ENCODE measurements at regions of chr11 and their contacts with region 1.

Region 1: DNA sequence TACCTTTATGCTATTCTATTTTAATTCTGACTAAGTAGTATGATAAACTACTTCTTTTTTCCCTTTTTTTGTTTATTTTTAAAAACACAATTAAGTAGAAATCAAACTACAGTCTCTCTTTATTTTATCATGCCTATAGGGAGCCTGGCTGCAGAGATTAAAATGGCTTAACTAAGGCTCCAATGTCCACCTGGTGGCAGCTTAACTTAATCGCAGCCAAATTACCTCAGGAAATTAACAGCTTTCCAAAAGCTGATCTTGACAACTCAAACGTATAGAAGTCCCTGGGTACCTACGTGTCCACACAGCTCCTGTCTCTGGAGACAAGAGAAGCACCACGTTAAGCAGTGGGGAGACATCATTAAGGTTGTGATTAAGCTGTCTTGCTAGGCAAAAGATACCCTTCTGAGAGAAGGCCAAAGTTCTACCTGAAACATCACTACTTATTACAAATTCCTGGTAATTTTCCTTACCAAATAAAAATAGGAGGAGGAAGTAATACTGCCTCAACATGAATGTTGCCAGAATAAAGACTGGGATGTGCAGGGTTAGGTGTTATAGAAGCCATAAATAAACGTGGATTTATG is 63.2 kb upstream of the SNX19 start:
- DNase-seq: no peak
- CTCF ChIP-seq: peak; percentile 24

Region 2: GRCh38 chr11:130817330-130817944 is 162.0 kb before region 1 on chr11:
- CTCF ChIA-PET with region 1: no interaction called
- POLR2A ChIA-PET with region 1: no interaction called
- DNase-seq: no peak
- CTCF ChIP-seq: no peak

Region 3: DNA sequence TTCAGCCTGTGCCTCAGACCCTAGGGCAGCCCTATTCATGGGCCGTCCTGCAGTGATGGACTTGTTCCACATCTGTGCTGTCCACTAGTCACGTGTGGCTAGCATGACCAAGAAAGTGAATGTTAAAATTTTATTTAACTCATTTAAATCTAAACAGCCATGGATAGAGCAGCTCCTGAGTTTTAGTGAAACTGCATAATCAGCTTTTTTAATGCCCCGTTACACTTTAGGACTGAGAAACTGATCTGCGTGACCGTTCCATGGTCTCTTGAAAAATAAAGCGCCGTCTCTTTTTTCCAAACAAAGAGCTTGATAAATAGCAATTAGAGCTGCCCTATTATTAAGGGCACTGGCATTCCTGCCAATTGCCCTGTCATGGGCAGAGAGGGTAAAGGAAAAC is 13.3 kb after region 1 on chr11:
- CTCF ChIA-PET with region 1: interaction called, 12 read pairs
- POLR2A ChIA-PET with region 1: no interaction called
- DNase-seq: no peak
- CTCF ChIP-seq: no peak

Region 4: DNA sequence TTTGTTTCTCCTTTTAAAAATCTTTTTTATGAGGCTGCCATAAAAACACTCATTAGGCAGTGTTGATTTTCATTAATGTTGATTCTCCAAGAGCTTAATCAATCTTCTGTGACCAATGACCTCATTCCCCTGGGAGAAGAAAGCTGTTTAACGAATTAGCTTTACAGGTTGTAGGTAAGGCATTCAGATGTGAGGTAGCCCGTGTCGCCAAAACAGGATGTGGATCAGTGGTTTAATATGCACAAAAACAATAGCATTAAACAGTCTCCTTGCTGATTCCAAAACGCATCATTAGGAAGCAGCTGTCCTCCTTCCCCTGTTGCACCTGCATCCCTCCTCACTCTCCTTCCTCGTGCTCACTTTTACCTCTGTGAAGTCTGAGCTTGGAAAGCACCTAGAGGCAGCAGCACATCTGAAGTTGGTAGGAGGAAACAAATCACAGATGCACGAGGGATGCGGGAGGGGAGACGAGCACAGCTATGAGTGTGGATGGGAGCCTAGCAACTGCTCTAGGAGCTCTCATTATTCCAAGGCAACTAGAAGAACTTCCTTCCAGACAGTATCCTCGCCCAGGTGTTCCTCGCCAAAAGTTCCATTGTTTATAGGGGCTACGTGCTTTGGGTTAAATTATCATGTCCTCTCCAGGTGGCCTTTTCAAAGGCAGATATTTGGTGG is 116.2 kb after region 1 on chr11:
- CTCF ChIA-PET with region 1: no interaction called
- POLR2A ChIA-PET with region 1: no interaction called
- DNase-seq: no peak
- CTCF ChIP-seq: no peak